ENCODE measurements at regions of chr18 and their contacts with region 1.

Region 1: DNA sequence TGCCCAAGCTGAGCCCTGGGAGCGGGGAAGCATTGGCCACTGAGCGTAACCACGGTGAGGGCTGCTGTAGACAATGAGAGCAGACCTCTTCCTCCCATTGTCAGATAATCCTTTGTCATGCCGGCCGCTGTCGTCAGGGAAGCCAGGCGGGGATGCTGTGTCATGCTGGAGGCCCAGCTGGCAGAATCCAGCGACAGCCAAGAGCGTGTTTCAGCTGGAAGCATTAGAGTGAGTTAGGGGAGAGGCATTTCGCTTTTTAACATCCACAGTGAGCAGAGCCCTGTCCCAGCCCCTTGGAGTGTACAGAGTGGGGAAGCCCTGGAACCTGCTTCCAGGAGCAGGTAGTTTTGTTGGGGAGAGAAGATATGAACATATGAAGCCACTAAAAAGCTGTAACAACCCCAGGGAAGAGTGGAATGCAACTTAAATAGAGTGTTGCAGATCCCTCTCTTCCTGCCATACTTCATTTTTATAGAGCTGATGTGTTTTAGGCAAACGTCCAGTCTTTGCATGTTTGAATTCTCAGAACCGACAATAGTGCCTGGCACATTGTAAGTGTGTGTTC is 7.0 kb downstream of the CTIF start:
- DNase-seq: peak; percentile 65 to 79
- ATAC-seq: peak; percentile 26 to 75 (median 61)
- H3K4me3 ChIP-seq: no peak overlapping the region
- H3K27ac ChIP-seq: peak overlapping the region in 8 of 10 donors; percentile 11 to 79 (median 53)
- H3K4me1 ChIP-seq: peaks cover 16 to 95% (median 72%) of the 10 kb centered on the region in 9 donors
- H3K27me3 ChIP-seq: no peaks in the 10 kb centered on the region
- CTCF ChIP-seq: no peak

Region 2: GRCh38 chr18:48488388-48488850 is 57.4 kb before region 1 on chr18:
- intact Hi-C with region 1: loop called in 1 of 10 experiments (anchors 5 kb)
- DNase-seq: peak; percentile 63 to 81
- ATAC-seq: peak; percentile 79 to 95 (median 91)
- H3K4me3 ChIP-seq: no peak overlapping the region
- H3K27ac ChIP-seq: peak overlapping the region in 5 of 10 donors; percentile 46 to 75 (median 72)
- H3K4me1 ChIP-seq: peaks cover 0 to 37% (median 16%) of the 10 kb centered on the region in 9 donors
- H3K27me3 ChIP-seq: no peaks in the 10 kb centered on the region
- CTCF ChIP-seq: no peak

Region 3: DNA sequence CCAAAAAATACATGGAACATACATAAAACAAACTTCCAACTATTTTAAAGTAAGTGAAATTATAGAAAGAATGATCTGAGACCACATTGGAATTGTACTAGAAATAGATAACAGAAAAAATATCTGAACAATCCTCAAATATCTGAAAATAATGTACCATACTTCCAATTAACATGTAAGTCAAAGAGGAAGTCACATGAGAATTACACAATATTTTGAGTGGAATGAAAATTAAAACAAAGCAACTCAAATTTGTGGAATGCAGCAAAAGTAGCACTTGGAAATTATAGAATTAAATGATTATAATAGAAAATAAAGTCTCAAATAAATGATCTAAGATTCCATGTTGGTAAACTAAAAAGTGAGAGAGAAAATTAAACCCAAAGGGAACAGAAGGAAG is 45.3 kb before region 1 on chr18:
- intact Hi-C with region 1: no loop called
- DNase-seq: no peak
- ATAC-seq: no peak
- H3K4me3 ChIP-seq: no peak overlapping the region
- H3K27ac ChIP-seq: no peak overlapping the region
- H3K4me1 ChIP-seq: no peaks in the 10 kb centered on the region
- H3K27me3 ChIP-seq: peaks cover 0 to 2% (median 0%) of the 10 kb centered on the region in 7 donors
- CTCF ChIP-seq: no peak

Region 4: DNA sequence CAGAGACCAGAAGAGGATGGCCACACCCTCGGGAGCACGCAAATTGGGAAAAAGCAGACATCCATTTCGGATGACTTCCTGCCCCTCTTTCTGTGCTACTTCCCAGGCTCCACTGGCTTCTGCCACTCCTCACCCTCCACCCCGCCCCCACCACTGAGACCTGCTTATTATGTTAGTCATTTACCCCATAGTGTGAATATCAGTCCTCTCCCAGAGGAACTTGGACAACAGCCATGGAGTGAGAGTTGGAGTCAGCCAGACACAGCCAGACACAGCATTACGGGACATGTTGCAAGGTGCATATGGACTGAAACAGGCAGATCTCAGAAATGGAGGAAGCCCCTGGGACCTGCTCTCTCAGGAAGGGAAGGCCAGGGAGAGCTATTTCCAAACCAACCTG is 44.8 kb after region 1 on chr18:
- intact Hi-C with region 1: loop called in 3 of 10 experiments (anchors 1 to 5 kb)
- DNase-seq: no peak
- ATAC-seq: peak in 6 of 8 donors; percentile 6 to 62 (median 36)
- H3K4me3 ChIP-seq: no peak overlapping the region
- H3K27ac ChIP-seq: peak overlapping the region in 9 of 10 donors; percentile 19 to 86 (median 74)
- H3K4me1 ChIP-seq: peaks cover 6 to 64% (median 31%) of the 10 kb centered on the region in 9 donors
- H3K27me3 ChIP-seq: no peaks in the 10 kb centered on the region
- CTCF ChIP-seq: no peak

Region 5: DNA sequence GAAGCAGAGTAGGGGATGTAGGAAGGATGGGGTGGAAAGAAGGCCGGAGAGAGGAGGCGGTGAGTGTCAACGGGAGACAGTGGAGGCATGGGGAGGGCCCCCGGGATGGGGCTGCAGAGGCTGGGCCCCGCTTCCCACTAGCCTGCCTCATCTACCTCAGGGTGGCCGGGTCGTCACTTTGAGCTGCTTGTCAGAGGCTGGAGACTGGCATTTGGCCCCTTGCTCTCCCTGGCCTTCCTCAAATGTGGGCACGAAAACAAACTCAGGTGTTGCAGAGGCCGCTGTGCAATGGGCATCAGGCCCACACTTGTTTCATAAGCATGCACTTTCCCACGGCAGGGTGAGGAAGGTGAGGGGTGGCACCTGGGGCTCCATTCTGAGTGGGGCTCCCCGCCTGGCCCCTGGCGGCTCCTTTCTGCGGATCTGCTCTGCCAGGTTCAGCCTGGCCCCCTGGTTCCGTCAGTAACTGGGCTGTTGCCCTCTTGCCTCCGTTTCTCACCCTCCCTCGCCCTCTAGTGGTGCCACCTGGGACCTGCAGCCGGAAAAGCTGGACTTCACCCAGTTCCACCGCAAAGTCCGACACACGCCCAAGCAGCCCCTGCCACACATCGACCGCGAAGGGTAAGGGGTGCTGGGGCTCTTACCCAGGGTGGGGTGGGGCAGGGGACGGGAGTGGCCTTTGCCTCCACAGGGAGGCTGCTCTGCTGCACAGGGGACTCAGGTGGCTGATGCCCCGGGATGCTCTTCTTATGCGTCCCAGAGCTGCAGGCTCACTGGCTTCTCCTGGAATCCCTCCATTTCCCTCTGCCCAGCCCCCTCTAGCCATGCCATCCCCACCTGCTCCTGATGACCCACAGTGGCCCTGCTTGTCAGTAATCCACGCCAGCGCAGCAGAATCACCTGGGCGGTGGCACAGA is 118.3 kb after region 1 on chr18:
- intact Hi-C with region 1: loop called in 4 of 10 experiments (anchors 5 to 10 kb)
- DNase-seq: peak; percentile 68 to 76
- ATAC-seq: peak; percentile 34 to 78 (median 66)
- H3K4me3 ChIP-seq: no peak overlapping the region
- H3K27ac ChIP-seq: no peak overlapping the region
- H3K4me1 ChIP-seq: peaks cover 0 to 39% (median 24%) of the 10 kb centered on the region in 9 donors
- H3K27me3 ChIP-seq: no peaks in the 10 kb centered on the region
- CTCF ChIP-seq: peak; percentile 84 to 93 (median 88)

Measured in heart right ventricle (tissue), 16 donors.